ENCODE measurements at regions of chr5 and their contacts with region 1.

Region 1: DNA sequence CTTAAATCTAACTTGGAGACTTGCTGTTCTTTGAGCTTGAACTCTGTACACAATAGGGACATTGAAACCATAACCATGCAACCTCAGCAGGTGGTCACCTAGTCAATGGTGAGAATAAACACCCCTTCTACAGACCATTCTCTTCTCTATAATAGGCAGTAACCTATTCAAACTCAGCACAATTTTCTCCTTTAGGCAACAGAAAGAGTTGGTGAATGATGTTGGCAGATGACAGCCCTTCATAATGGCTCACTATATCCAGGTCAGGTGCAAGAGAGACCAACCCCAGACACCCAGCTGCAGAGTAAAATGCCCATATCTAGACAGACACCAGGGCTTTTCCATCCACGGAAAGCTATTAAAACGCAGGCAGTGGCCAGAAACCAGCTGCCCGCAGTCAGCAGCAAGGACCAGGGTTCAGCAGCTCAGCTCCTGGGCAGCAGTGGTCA is 106.7 kb downstream of the SERINC5 start:
- DNase-seq: no peak
- H3K4me3 ChIP-seq: no peak overlapping the region
- H3K4me3 Mint-ChIP-seq: no peak overlapping the region
- H3K27ac ChIP-seq: no peak overlapping the region
- H3K27ac Mint-ChIP-seq: peak overlapping the region in 1 of 7 donors; percentile 37
- H3K4me1 ChIP-seq: peaks cover 33 to 43% of the 10 kb centered on the region in 2 donors
- H3K4me1 Mint-ChIP-seq: peaks cover 46% of the 10 kb centered on the region
- H3K27me3 ChIP-seq: no peaks in the 10 kb centered on the region
- H3K27me3 Mint-ChIP-seq: no peaks in the 10 kb centered on the region
- CTCF ChIP-seq: no peak

Region 2: DNA sequence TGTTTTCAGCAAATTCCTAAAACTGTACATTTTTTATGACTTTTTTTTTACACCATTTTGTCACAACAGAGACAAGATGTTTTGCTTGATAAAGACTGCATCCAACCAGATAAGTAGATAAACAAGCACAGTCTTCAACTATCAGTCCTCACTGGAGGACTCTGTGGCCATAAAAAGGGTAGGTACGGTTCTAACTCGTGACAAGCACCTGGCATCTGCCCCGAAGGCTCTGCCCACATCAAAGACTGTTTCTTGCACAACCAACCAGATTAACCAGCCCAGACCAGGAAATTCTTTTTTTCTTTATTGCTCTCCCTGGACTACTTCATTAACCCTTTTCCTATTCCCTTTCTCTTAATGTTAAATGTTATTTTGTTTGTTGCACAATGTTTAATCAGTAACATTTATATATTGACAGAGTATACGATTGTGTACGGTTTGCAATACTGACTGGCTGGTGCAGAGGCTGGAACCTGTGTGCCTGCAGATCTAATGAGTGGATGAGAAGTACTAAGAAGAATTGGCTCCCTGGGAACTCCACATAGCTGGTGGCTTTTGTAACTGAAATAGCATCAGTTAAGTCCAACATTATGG is 32.5 kb after region 1 on chr5:
- intact Hi-C with region 1: loop called in 1 of 2 experiments (anchors 5 kb)
- DNase-seq: no peak
- H3K4me3 ChIP-seq: no peak overlapping the region
- H3K4me3 Mint-ChIP-seq: no peak overlapping the region
- H3K27ac ChIP-seq: no peak overlapping the region
- H3K27ac Mint-ChIP-seq: peak overlapping the region in 3 of 7 donors; percentile 19 to 54 (median 38)
- H3K4me1 ChIP-seq: peaks cover 32 to 53% of the 10 kb centered on the region in 2 donors
- H3K4me1 Mint-ChIP-seq: peaks cover 68% of the 10 kb centered on the region
- H3K27me3 ChIP-seq: no peaks in the 10 kb centered on the region
- H3K27me3 Mint-ChIP-seq: peaks cover 0 to under 1% (median 0%) of the 10 kb centered on the region in 3 donors
- CTCF ChIP-seq: no peak